Posterior vena cava (tissue), 2 donors: ENCODE measurements at regions of chr22 and their contacts with region 1.

Region 1: GRCh38 chr22:41940832-41941765 is 5.9 kb downstream of the CENPM start:
- DNase-seq: peak; percentile 95

Region 2: GRCh38 chr22:41697126-41697775 is 243.8 kb before region 1 on chr22:
- intact Hi-C with region 1: loop called in 1 of 2 experiments (anchors 5 kb)
- DNase-seq: peak; percentile 98

Region 3: DNA sequence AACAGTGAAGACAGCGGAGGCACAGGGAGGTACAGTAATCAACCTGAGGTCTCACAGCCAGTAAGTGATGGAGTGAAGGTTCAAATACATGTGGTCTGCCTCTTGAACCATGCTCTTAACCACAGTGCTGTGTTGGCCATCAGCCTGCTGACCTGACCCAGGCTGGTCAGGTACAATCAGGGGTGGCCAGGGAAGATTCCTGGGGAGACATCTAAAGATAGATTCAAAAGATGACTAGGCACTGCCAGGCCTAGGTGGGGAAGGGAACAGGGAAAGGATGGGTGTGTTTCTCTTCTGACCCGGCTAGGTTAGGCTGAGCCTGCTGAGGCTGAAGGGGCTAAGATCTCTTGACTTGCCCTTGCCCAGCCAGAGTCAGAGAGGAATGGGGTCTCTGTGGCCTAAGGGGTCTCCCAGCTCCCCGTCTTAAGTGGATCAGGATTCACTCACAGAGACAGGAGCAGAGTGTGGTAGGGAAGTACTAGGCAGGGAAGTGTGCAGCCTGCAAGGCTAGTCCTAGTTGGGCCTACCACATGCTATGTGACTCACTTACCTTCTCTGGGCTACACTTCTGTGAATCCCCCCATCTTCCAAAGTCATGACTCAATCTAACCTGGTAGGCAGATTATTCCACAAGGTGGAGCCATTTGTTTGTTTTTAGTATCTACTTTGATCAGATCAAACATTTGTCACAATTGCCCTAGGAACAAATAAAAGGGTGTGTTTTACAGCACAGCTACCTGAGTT is 118.6 kb before region 1 on chr22:
- intact Hi-C with region 1: loop called (anchors 5 kb)
- DNase-seq: no peak

Region 4: GRCh38 chr22:43289976-43290721 is 1349.0 kb after region 1 on chr22:
- intact Hi-C with region 1: no loop called
- DNase-seq: no peak